Prostate gland (tissue), 2 donors: ENCODE measurements at regions of chr17 and their contacts with region 1.

Region 1: DNA sequence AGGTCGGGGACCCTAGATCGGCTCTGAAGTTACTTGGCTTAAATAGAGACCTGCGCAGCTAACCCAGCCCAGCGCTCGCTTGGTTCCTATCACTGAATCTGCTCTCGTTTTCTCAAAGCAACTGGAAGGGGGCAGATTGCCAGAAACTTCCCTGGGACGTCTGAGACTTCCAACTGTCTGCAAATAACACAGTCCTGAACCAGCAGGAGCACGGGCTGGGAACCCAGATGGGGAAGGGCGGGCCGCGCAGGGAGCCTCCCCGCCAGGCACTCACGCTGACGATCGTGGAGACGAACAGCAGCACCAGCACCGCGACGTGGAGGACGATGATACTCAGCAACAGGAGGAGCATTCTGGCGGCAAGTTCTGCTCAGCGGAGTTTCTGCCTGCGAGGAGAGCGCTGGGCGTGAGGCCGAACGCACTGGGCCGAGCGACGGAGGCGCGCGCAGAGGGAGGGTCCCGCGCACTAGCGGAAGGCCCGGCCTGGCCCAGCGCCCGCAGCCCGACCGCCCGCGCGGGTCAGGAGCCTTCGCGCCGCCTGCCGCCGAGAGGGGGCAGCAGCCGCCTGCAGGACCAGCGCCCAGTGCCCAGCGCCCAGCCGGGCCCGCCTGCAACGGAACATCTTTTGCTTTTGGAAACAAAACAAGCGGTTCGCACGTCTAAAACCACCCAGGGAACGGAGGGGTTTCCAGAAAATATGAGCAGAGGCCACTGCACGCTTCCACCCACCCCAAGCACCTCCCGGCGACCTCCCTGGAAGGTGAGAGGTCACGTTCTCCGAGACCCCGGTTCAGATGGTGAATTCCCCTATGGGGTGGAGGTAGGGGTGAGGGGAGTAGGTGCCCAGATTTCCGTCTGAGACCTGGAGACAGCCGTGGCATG is 4.5 kb downstream of the PMP22 start:
- DNase-seq: peak; percentile 71
- H3K4me3 ChIP-seq: peak overlapping the region; percentile 41 to 42
- H3K27ac ChIP-seq: peak overlapping the region; percentile 79 to 83
- H3K4me1 ChIP-seq: peaks cover 8% of the 10 kb centered on the region
- H3K27me3 ChIP-seq: no peaks in the 10 kb centered on the region
- CTCF ChIP-seq: peak; percentile 72 to 93 (median 84)
- POLR2A ChIP-seq: peak; percentile 23

Region 2: GRCh38 chr17:15307710-15308111 is 47.1 kb after region 1 on chr17:
- intact Hi-C with region 1: loop called (anchors 2 kb)
- DNase-seq: no peak
- H3K4me3 ChIP-seq: no peak overlapping the region
- H3K27ac ChIP-seq: no peak overlapping the region
- H3K4me1 ChIP-seq: no peaks in the 10 kb centered on the region
- H3K27me3 ChIP-seq: no peaks in the 10 kb centered on the region
- CTCF ChIP-seq: no peak
- POLR2A ChIP-seq: no peak

Region 3: GRCh38 chr17:15351925-15352324 is 91.3 kb after region 1 on chr17:
- intact Hi-C with region 1: loop called (anchors 5 kb)
- DNase-seq: no peak
- H3K4me3 ChIP-seq: no peak overlapping the region
- H3K27ac ChIP-seq: no peak overlapping the region
- H3K4me1 ChIP-seq: no peaks in the 10 kb centered on the region
- H3K27me3 ChIP-seq: no peaks in the 10 kb centered on the region
- CTCF ChIP-seq: no peak
- POLR2A ChIP-seq: no peak

Region 4: DNA sequence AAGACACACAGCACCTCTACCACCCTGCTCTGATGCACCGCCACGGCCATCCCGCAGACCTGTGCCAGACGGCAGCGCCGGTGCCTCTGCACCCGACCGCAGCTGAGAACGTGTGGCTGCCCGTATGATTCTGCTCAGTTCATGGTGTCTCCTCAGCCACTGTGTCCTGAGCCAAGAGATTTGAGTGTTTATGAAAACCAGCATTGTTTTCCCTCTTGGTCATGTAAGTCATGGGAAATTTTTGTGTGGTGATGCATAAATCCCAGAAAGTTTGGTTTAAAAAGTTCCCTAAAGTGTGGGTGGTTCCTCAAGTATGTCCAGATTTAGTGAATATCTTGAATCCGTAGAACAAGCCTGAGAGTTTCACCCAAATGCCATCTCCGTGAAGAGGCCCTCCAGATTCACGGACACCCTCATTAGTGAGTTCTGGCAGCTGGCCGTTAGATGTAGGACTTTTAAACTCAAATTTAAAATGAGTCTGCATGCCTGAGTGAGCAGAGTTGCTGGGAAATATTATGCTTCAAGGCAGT is 149.2 kb after region 1 on chr17:
- intact Hi-C with region 1: loop called (anchors 2 kb)
- DNase-seq: no peak
- H3K4me3 ChIP-seq: no peak overlapping the region
- H3K27ac ChIP-seq: peak overlapping the region in 1 of 2 donors; percentile 19
- H3K4me1 ChIP-seq: no peaks in the 10 kb centered on the region
- H3K27me3 ChIP-seq: no peaks in the 10 kb centered on the region
- CTCF ChIP-seq: no peak
- POLR2A ChIP-seq: no peak

Region 5: DNA sequence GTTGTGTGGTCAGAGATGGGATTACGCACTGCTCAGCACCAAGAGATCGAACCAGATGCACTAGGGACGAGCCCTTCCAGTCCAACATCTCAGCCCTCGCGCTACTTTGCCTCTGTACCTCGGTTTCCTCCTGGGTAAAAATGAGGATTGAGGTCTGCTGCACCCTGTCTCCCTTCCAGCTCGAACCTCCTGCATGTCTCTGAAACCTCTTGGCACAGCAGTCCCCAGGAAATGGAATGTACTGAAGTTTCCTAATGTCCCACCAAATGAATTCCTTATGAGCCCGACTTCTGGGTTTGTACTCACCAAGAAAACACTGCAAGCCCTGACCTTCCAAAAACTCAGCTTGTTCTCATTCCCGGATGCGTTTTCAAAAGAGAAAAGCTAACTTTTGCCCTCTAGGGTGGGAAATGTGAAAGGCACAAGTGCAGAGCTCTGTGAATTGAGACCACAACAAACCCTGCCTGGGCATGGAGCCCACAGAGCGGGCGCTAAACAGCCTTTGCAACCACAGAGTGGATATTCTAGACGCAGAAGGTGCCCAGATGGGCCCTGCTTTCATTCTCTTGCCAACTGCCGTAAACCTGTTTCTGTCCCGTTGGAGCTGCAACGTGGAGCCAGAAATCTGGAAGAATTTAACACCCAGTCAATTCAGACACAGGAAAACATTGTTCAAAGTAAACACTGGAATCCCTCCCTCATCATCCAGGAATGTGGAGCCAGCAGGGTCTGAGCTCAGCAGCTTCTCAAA is 196.5 kb after region 1 on chr17:
- intact Hi-C with region 1: loop called (anchors 2 kb)
- DNase-seq: no peak
- H3K4me3 ChIP-seq: no peak overlapping the region
- H3K27ac ChIP-seq: peak overlapping the region; percentile 42 to 47
- H3K4me1 ChIP-seq: peaks cover 5% of the 10 kb centered on the region
- H3K27me3 ChIP-seq: no peaks in the 10 kb centered on the region
- CTCF ChIP-seq: peak in 1 of 4 experiments; percentile 31
- POLR2A ChIP-seq: no peak

Region 6: GRCh38 chr17:15462976-15463772 is 202.6 kb after region 1 on chr17:
- intact Hi-C with region 1: loop called (anchors 2 kb)
- DNase-seq: no peak
- H3K4me3 ChIP-seq: no peak overlapping the region
- H3K27ac ChIP-seq: peak overlapping the region in 1 of 2 donors; percentile 23
- H3K4me1 ChIP-seq: no peaks in the 10 kb centered on the region
- H3K27me3 ChIP-seq: no peaks in the 10 kb centered on the region
- CTCF ChIP-seq: no peak
- POLR2A ChIP-seq: no peak

Region 7: GRCh38 chr17:15502369-15503112 is 241.9 kb after region 1 on chr17:
- intact Hi-C with region 1: loop called (anchors 1 kb)
- DNase-seq: peak; percentile 84
- H3K4me3 ChIP-seq: peak overlapping the region in 1 of 2 donors; percentile 2
- H3K27ac ChIP-seq: peak overlapping the region; percentile 28 to 47
- H3K4me1 ChIP-seq: no peaks in the 10 kb centered on the region
- H3K27me3 ChIP-seq: no peaks in the 10 kb centered on the region
- CTCF ChIP-seq: peak; percentile 63 to 87 (median 76)
- POLR2A ChIP-seq: peak; percentile 6